Esophagus squamous epithelium (tissue), 5 donors: ENCODE measurements at regions of chr10 and their contacts with region 1.

Region 1: GRCh38 chr10:38094158-38094920 is at the start of gene ZNF37A:
- DNase-seq: peak; percentile 80
- H3K4me3 ChIP-seq: peak within 1 kb of the TSS; percentile 68 to 87 (median 78)
- H3K27ac ChIP-seq: peak within 1 kb of the TSS; percentile 85 to 92 (median 90)
- H3K4me1 ChIP-seq: peaks cover 5 to 19% (median 10%) of the 10 kb centered on the region in 3 donors
- H3K27me3 ChIP-seq: no peaks in the 10 kb centered on the region
- CTCF ChIP-seq: peak in 1 of 6 experiments; percentile 6
- POLR2A ChIP-seq: peak in 2 of 4 donors; percentile 25 to 54
- total RNA-seq, gene ZNF37A: 4.4 to 17.6 (median 11.9) TPM

Region 2: GRCh38 chr10:37549054-37549453 is 545.3 kb before region 1 on chr10:
- intact Hi-C with region 1: no loop called
- DNase-seq: no peak
- H3K4me3 ChIP-seq: no peak overlapping the region
- H3K27ac ChIP-seq: no peak overlapping the region
- H3K4me1 ChIP-seq: no peaks in the 10 kb centered on the region
- H3K27me3 ChIP-seq: no peaks in the 10 kb centered on the region
- CTCF ChIP-seq: no peak
- POLR2A ChIP-seq: no peak

Region 3: DNA sequence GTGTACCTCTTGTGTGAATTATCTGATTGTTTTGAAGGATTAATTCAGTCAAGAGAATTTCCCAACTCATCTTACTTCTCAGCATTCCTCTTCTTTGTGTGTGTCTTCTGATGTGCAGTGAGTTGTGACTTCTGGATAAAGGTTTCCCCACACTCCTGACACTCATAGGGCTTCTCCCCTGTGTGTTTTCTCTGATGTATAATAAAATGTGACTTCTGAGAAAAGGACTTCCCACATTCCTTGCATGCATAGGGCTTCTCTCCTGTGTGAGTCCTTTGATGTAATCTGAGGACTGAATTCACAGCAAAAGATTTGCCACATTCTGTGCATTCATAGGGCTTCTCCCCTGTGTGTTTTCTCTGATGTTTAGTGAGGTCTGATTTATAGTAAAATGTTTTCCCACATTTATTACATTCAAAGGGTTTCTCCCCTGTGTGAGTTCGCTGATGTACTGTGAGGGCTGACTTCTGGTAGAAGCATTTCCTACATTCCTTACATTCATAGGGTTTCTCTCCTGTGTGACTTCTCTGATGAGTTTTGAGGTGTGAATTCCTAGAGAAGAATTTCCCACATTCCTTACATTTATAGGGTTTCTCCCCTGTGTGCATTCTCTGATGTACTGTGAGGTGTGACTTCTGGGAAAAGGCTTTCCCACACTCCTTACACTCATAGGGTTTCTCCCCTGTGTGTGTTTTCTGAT is 142.1 kb before region 1 on chr10:
- intact Hi-C with region 1: no loop called
- DNase-seq: no peak
- H3K4me3 ChIP-seq: no peak overlapping the region
- H3K27ac ChIP-seq: no peak overlapping the region
- H3K4me1 ChIP-seq: no peaks in the 10 kb centered on the region
- H3K27me3 ChIP-seq: no peaks in the 10 kb centered on the region
- CTCF ChIP-seq: no peak
- POLR2A ChIP-seq: no peak

Region 4: DNA sequence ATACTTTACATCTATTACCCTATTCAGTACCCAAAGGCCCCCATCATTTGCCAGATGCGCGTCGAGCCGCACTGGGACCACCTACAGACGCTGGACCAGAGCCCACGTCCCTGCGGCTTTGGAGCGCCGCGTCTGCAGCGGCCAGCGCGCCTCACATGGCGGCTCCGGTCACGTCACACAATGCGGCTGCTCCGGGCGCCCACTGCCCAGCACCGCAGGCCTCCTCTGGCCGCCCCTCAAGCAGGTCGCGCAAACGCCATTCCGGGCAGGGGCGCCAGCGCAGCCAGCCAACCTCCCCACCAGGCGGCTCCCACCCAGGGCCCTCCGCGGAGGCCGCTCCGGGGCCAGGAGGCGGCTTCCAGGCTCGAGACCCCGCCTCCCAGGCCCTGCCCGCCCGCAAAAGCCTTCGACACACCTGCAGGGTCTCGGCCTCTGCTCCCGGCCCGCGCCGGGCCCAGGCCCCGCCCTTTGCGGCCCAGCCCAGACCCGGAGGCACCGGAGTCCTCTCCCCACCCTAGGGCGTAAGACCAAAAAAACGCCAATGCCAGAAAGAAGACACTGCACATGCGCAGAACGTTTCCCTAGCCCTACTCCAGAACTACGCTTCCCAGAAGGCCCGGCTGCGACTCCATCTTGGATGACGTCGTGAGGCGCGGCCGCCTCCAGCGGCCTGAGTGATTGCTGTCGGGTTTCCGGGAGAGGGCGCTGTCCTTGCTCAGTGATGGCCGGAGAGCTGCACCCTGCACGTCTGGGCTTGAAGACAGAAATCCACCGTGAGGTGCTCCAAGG is 118.1 kb before region 1 on chr10 and contains the start of gene ZNF25:
- intact Hi-C with region 1: loop called (anchors 10 kb)
- DNase-seq: peak; percentile 88
- H3K4me3 ChIP-seq: peak within 1 kb of the TSS; percentile 66 to 84 (median 72)
- H3K27ac ChIP-seq: peak within 1 kb of the TSS; percentile 94 to 98 (median 94)
- H3K4me1 ChIP-seq: peaks cover 0 to 22% (median 0%) of the 10 kb centered on the region in 3 donors
- H3K27me3 ChIP-seq: no peaks in the 10 kb centered on the region
- CTCF ChIP-seq: peak; percentile 88 to 96 (median 94)
- POLR2A ChIP-seq: peak in 3 of 4 donors; percentile 61 to 88 (median 84)
- total RNA-seq, gene ZNF25: 1.7 to 8.0 (median 3.2) TPM